Endothelial cell of umbilical vein (primary cell): ENCODE measurements at regions of chr2 and their contacts with region 1.

Region 1: GRCh38 chr2:1625208-1625937 is 118.9 kb downstream of the PXDN start:
- DNase-seq: peak; percentile 92
- H3K4me3 ChIP-seq: no peak overlapping the region
- H3K27ac ChIP-seq: peak overlapping the region; percentile 79
- H3K4me1 ChIP-seq: peaks cover 23% of the 10 kb centered on the region
- H3K27me3 ChIP-seq: no peaks in the 10 kb centered on the region
- CTCF ChIP-seq: no peak
- POLR2A ChIP-seq: peak; percentile 41

Region 2: DNA sequence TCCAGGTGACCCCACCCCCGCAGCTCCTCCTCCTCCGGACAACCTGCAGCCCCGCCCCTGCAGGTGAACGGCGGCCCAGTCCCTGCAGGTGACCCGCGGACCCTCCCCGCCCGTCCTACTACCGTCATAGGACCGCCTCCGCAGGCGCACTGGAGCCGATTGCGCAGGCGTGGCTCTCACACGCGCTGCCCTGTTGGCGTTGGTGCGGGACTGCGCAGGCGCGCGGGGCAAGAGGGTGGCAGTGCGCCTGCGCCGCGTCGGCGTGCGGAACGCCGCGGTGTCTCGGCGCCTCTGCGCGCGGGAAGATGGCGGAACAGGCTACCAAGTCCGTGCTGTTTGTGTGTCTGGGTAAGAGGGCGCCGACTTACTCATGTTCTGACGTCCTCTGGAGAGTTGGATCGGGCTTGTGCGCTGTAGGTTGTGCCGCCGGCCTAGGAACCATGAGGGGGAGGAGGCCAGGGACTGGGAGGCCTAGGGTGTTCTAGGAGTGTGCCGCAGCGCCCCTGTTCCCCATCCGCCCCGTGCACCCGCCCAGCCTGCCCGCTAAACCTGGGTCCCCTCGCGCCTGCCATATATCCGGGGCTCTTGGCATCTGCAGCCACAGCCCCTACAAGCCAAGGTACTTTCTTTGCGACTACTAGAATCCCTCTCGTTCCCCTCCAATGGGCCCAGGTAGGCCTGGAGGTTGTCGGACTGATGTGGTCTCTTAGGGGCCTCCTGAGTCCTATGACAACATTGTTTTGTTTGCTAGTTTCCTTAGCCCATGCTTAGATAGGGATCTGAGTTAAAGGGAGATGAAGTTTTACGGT is 1360.5 kb before region 1 on chr2 and contains the start of gene ACP1:
- CTCF ChIA-PET with region 1: no interaction called
- POLR2A ChIA-PET with region 1: no interaction called
- dilution Hi-C with region 1: no loop called
- intact Hi-C with region 1: loop called (anchors 5 kb)
- DNase-seq: peak; percentile 97
- H3K4me3 ChIP-seq: peak within 1 kb of the TSS; percentile 75 to 90 (median 79)
- H3K27ac ChIP-seq: peak within 1 kb of the TSS; percentile 42
- H3K4me1 ChIP-seq: peaks cover 17% of the 10 kb centered on the region
- H3K27me3 ChIP-seq: no peaks in the 10 kb centered on the region
- CTCF ChIP-seq: no peak
- POLR2A ChIP-seq: peak; percentile 90
- total RNA-seq, gene ACP1: 76.2 and 80.2 TPM in 2 replicates

Region 3: GRCh38 chr2:1605102-1606045 is 20.0 kb before region 1 on chr2:
- CTCF ChIA-PET with region 1: interaction called, 17 read pairs
- POLR2A ChIA-PET with region 1: interaction called, 3 read pairs
- dilution Hi-C with region 1: no loop called
- intact Hi-C with region 1: loop called (anchors 1 kb)
- DNase-seq: peak; percentile 57
- H3K4me3 ChIP-seq: no peak overlapping the region
- H3K27ac ChIP-seq: peak overlapping the region; percentile 80
- H3K4me1 ChIP-seq: peaks cover 29% of the 10 kb centered on the region
- H3K27me3 ChIP-seq: peaks cover 0 to 2% of the 10 kb centered on the region in 2 experiments
- CTCF ChIP-seq: no peak
- POLR2A ChIP-seq: no peak

Region 4: GRCh38 chr2:1685957-1686784 is 60.8 kb after region 1 on chr2:
- CTCF ChIA-PET with region 1: no interaction called
- POLR2A ChIA-PET with region 1: no interaction called
- dilution Hi-C with region 1: no loop called
- intact Hi-C with region 1: loop called (anchors 2 kb)
- DNase-seq: peak; percentile 8
- H3K4me3 ChIP-seq: no peak overlapping the region
- H3K27ac ChIP-seq: peak overlapping the region; percentile 21
- H3K4me1 ChIP-seq: peaks cover 9% of the 10 kb centered on the region
- H3K27me3 ChIP-seq: no peaks in the 10 kb centered on the region
- CTCF ChIP-seq: no peak
- POLR2A ChIP-seq: no peak

Region 5: GRCh38 chr2:1721706-1722646 is 96.6 kb after region 1 on chr2:
- CTCF ChIA-PET with region 1: interaction called, 5 read pairs
- POLR2A ChIA-PET with region 1: no interaction called
- dilution Hi-C with region 1: no loop called
- intact Hi-C with region 1: loop called (anchors 1 kb)
- DNase-seq: peak; percentile 91
- H3K4me3 ChIP-seq: peak overlapping the region in 1 of 3 experiments; percentile 51
- H3K27ac ChIP-seq: peak overlapping the region; percentile 98
- H3K4me1 ChIP-seq: peaks cover 34% of the 10 kb centered on the region
- H3K27me3 ChIP-seq: no peaks in the 10 kb centered on the region
- CTCF ChIP-seq: no peak
- POLR2A ChIP-seq: no peak